Calu3 (cell line): ENCODE measurements at regions of chr5 and their contacts with region 1.

Region 1: DNA sequence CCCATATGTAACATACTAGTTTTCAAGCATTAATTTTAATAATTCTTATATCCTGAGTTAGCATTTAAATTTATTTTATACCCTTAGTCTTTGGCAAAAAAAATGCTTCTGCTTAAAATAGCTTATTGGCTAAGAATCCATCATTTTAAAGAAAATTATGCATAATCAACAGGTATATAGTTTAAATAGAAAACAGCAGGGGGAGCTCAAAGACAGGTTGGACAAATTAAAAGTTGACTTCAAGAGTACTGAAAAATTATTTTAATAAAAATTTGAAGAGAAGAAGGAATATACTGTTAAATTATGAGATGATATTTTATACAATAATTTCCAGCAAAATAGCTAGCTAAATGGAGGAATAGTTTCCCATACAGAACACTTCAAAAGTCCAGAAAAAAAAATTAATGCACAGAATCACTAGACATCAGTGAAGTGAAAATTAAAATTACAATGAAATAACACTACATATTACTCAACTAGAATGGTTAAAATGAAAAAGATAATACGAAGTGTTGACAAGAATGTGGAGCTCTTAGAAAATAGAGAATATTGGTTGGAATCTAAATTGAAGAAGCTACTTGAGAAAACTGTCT is 387.1 kb downstream of the PDE4D start:
- DNase-seq: no peak
- H3K4me3 Mint-ChIP-seq: no peak overlapping the region
- H3K27ac Mint-ChIP-seq: no peak overlapping the region
- H3K4me1 Mint-ChIP-seq: no peaks in the 10 kb centered on the region
- H3K27me3 Mint-ChIP-seq: no peaks in the 10 kb centered on the region
- CTCF ChIP-seq: peak; percentile 34

Region 2: GRCh38 chr5:59020611-59021285 is 485.6 kb before region 1 on chr5:
- CTCF ChIA-PET with region 1: no interaction called
- intact Hi-C with region 1: no loop called
- DNase-seq: no peak
- H3K4me3 Mint-ChIP-seq: no peak overlapping the region
- H3K27ac Mint-ChIP-seq: no peak overlapping the region
- H3K4me1 Mint-ChIP-seq: peaks cover 15% of the 10 kb centered on the region
- H3K27me3 Mint-ChIP-seq: no peaks in the 10 kb centered on the region
- CTCF ChIP-seq: no peak

Region 3: DNA sequence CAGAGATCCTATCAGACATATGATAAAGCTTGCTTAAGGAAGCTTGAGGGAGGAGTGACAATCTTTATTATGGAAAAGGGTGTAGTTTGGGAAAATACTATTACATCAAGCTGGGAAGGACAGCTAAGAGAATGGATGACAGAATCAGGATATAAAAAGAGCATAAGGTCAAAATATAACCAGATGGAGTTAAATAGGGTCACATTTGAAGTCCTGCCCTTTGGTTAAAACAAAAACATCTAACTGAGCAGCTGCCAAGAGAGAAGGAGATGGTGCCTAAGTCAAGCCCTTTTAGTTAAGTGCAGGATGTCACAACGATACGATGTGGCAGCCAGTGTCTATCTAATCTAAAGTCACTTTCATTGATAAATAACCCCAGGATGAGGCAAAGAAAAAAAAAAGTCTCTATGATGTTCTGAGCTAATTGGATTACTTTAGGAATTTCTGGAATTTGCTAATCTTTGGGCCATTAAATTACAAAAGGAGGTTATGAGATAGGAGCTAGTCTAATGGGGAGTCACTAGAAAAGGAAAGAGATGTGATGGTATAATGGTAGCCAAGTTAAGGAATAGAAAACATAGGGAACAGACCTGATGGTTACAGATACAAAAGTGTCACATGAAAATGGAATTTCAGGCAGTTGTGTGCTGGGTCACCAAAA is 22.0 kb after region 1 on chr5:
- CTCF ChIA-PET with region 1: no interaction called
- intact Hi-C with region 1: no loop called
- DNase-seq: no peak
- H3K4me3 Mint-ChIP-seq: no peak overlapping the region
- H3K27ac Mint-ChIP-seq: no peak overlapping the region
- H3K4me1 Mint-ChIP-seq: peaks cover 25% of the 10 kb centered on the region
- H3K27me3 Mint-ChIP-seq: no peaks in the 10 kb centered on the region
- CTCF ChIP-seq: no peak

Region 4: GRCh38 chr5:59587489-59588337 is 81.3 kb after region 1 on chr5:
- CTCF ChIA-PET with region 1: interaction called, 3 read pairs
- intact Hi-C with region 1: loop called (anchors 5 kb)
- DNase-seq: peak; percentile 77
- H3K4me3 Mint-ChIP-seq: peak overlapping the region; percentile 74
- H3K27ac Mint-ChIP-seq: peak overlapping the region; percentile 64
- H3K4me1 Mint-ChIP-seq: peaks cover 58% of the 10 kb centered on the region
- H3K27me3 Mint-ChIP-seq: no peaks in the 10 kb centered on the region
- CTCF ChIP-seq: no peak

Region 5: DNA sequence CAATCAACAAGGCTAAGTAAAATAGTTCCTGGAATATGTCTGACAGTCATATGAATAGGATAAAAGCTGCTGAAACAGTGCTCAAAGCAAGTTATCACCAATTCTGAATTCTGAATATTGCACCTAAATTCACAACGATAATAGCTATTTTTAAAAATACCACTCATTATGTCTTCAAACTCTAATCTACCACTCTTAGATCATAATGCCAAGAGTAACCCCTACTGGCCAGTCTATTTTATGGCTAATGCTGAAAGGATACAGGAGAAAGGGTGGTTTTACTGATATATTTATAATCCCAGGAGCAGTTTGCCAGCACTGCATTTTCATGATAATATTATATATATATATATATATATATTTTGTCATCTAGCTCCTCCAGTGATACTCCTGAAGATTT is 154.4 kb after region 1 on chr5:
- CTCF ChIA-PET with region 1: interaction called, 20 read pairs
- intact Hi-C with region 1: loop called (anchors 1 kb)
- DNase-seq: peak; percentile 11
- H3K4me3 Mint-ChIP-seq: no peak overlapping the region
- H3K27ac Mint-ChIP-seq: no peak overlapping the region
- H3K4me1 Mint-ChIP-seq: peaks cover 28% of the 10 kb centered on the region
- H3K27me3 Mint-ChIP-seq: no peaks in the 10 kb centered on the region
- CTCF ChIP-seq: peak; percentile 17

Region 6: DNA sequence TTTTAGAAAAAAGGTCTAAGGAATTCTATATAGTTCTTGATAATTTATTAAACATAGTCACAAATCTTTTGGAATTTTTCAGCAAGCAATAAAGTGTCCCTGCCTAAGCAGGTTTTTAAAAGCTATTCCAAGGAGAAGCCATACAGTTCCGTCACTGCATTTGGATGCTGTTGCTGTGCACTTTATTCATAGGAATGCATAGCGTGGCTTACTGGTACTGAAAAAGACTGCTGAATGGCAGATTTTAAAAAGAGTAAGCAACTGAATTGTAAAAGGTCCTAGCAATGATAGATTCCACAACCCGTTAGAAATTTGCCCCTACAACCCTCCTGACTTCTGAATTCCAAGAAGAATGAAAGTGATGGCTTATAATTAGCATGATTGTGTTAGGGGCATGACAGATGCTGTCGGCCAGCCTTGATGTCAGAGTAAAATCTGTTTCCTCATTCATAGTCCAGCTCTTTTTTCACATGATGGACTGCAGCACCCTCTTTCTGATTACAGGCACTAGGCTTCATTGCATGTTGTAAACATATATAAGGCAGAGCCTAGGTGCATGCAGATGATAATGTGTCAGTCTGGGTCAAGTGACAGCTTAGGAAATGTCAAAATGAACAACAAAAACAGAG is 160.2 kb after region 1 on chr5:
- CTCF ChIA-PET with region 1: interaction called, 10 read pairs
- intact Hi-C with region 1: no loop called
- DNase-seq: no peak
- H3K4me3 Mint-ChIP-seq: no peak overlapping the region
- H3K27ac Mint-ChIP-seq: no peak overlapping the region
- H3K4me1 Mint-ChIP-seq: peaks cover 18% of the 10 kb centered on the region
- H3K27me3 Mint-ChIP-seq: no peaks in the 10 kb centered on the region
- CTCF ChIP-seq: no peak

Region 7: GRCh38 chr5:59673438-59674058 is 167.2 kb after region 1 on chr5:
- CTCF ChIA-PET with region 1: interaction called, 10 read pairs
- intact Hi-C with region 1: loop called (anchors 1 kb)
- DNase-seq: peak; percentile 9
- H3K4me3 Mint-ChIP-seq: no peak overlapping the region
- H3K27ac Mint-ChIP-seq: no peak overlapping the region
- H3K4me1 Mint-ChIP-seq: no peaks in the 10 kb centered on the region
- H3K27me3 Mint-ChIP-seq: no peaks in the 10 kb centered on the region
- CTCF ChIP-seq: peak; percentile 63

Region 8: DNA sequence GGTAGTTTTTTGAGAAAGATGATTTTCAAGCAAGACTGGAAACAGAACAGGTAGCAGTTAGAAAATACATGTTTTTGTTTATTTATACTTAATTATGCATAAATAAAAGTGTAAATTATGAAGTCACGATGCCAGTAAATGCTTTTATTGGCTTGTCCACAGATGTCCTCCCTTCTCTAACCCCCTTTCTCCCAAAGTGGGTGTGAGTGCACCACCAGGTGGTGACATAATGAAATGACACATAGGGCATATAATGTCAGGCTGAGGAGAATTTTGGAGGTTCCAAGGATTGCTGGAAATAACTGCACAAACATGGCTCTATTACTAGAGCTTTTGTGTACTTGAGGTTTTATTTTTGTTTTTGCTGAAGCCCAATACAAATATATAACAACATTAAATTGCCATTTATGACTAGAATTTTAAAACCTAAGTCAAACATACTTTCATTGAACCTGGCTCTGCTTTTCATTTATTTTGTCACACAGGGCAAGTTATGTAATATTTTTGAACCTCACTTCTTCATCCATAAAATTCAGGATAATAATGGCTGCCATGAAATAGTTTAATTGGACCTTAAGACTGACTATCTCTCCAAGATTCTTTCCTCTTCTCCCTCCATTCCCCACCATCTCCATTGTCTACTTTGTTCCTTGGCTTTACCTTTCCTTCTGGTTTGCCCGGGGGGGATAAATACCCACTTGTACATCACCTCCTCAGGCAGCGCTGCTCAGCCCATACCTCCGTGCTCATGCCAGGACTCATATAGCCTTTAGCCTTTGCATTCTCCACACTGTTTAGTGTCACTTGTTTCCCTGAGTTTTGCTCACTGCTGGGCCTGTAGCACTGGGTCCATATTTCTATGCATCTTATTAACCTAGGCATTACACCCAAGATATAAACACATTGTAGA is 218.4 kb after region 1 on chr5:
- CTCF ChIA-PET with region 1: no interaction called
- intact Hi-C with region 1: loop called (anchors 5 kb)
- DNase-seq: peak; percentile 68
- H3K4me3 Mint-ChIP-seq: no peak overlapping the region
- H3K27ac Mint-ChIP-seq: no peak overlapping the region
- H3K4me1 Mint-ChIP-seq: peaks cover 8% of the 10 kb centered on the region
- H3K27me3 Mint-ChIP-seq: no peaks in the 10 kb centered on the region
- CTCF ChIP-seq: peak; percentile 76